ENCODE measurements at regions of chr10 and their contacts with region 1.

Region 1: GRCh38 chr10:69716711-69717560 is 84.8 kb upstream of the COL13A1 start:
- DNase-seq: peak; percentile 95
- ATAC-seq: peak; percentile 93
- H3K4me3 ChIP-seq: no peak overlapping the region
- H3K27ac ChIP-seq: no peak overlapping the region
- H3K4me1 ChIP-seq: peaks cover 3% of the 10 kb centered on the region; the same call in 1 of the 2 replicates
- H3K27me3 ChIP-seq: no peaks in the 10 kb centered on the region
- CTCF ChIP-seq: peak; percentile 99

Region 2: GRCh38 chr10:69413221-69413865 is 303.6 kb before region 1 on chr10:
- CTCF ChIA-PET with region 1: no interaction called
- POLR2A ChIA-PET with region 1: no interaction called
- intact Hi-C with region 1: no loop called
- DNase-seq: peak; percentile 69
- ATAC-seq: peak; percentile 25
- H3K4me3 ChIP-seq: no peak overlapping the region
- H3K27ac ChIP-seq: no peak overlapping the region
- H3K4me1 ChIP-seq: peaks cover 8% of the 10 kb centered on the region
- H3K27me3 ChIP-seq: no peaks in the 10 kb centered on the region
- CTCF ChIP-seq: peak; percentile 86

Region 3: DNA sequence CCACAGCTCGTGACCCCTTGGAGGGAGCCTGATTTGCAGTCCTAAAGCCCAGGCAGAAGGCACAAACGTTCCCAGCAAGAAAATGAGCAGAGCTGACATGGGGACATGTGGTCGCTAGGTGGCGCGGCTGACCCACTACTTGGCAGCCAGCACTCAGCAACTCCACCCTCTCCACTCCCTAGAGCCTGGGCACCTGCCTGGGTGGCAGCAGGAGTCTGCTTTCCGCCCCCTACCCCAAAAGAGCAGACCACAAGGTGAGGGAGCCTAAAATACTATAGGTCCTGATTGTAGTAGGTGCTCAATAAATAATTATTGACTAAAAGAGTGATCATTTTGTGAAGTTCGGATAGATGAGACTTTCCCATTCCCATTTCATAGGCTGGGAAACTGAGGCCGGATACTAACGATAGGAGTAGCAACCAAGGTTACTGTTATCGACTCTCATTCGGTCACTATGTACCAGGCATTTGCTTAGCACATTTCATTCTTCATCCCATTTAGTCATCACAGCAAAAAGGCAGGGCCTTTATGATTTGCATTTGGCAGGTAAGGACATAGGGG is 201.2 kb before region 1 on chr10:
- CTCF ChIA-PET with region 1: no interaction called
- POLR2A ChIA-PET with region 1: no interaction called
- intact Hi-C with region 1: loop called (anchors 5 kb)
- DNase-seq: peak; percentile 92
- ATAC-seq: peak; percentile 96
- H3K4me3 ChIP-seq: no peak overlapping the region
- H3K27ac ChIP-seq: no peak overlapping the region
- H3K4me1 ChIP-seq: no peaks in the 10 kb centered on the region
- H3K27me3 ChIP-seq: no peaks in the 10 kb centered on the region
- CTCF ChIP-seq: peak; percentile 98

Region 4: GRCh38 chr10:69644658-69645295 is 72.2 kb before region 1 on chr10:
- CTCF ChIA-PET with region 1: interaction called, 3 read pairs
- POLR2A ChIA-PET with region 1: no interaction called
- intact Hi-C with region 1: loop called (anchors 1 kb)
- DNase-seq: peak; percentile 89
- ATAC-seq: peak; percentile 68
- H3K4me3 ChIP-seq: no peak overlapping the region
- H3K27ac ChIP-seq: no peak overlapping the region
- H3K4me1 ChIP-seq: peaks cover 10% of the 10 kb centered on the region
- H3K27me3 ChIP-seq: no peaks in the 10 kb centered on the region
- CTCF ChIP-seq: peak; percentile 100

Region 5: GRCh38 chr10:69696073-69696731 is 20.7 kb before region 1 on chr10:
- CTCF ChIA-PET with region 1: interaction called, 8 read pairs
- POLR2A ChIA-PET with region 1: no interaction called
- intact Hi-C with region 1: loop called (anchors 1 kb)
- DNase-seq: peak; percentile 98
- ATAC-seq: peak; percentile 94
- H3K4me3 ChIP-seq: no peak overlapping the region
- H3K27ac ChIP-seq: peak overlapping the region; percentile 17
- H3K4me1 ChIP-seq: peaks cover 7% of the 10 kb centered on the region
- H3K27me3 ChIP-seq: peaks cover 17% of the 10 kb centered on the region; the same call in 1 of the 2 replicates
- CTCF ChIP-seq: peak; percentile 98

Region 6: DNA sequence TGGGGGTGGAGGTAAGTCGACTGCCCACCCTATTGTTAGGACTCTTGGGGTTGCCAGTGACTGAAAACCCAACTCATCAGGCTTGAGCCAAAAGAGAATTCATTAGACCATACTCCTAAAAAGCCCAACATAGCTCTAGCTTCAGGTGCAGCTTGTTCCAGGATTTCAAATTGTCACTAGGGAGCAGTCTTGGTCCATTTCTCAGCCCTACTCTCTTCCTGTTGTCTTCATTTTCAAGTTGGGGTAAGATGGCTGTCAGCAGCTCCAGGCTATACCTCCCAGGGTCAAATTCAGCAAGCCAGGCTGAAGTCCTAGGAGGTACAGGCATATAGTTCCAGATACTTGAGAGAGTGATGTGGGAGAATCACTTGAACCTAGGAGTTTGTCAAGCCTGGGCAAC is 69.9 kb after region 1 on chr10:
- CTCF ChIA-PET with region 1: interaction called, 11 read pairs
- POLR2A ChIA-PET with region 1: no interaction called
- intact Hi-C with region 1: no loop called
- DNase-seq: peak; percentile 82
- ATAC-seq: peak; percentile 92
- H3K4me3 ChIP-seq: no peak overlapping the region
- H3K27ac ChIP-seq: no peak overlapping the region
- H3K4me1 ChIP-seq: no peaks in the 10 kb centered on the region
- H3K27me3 ChIP-seq: peaks cover 27% of the 10 kb centered on the region
- CTCF ChIP-seq: peak; percentile 83

Measured in PC-3 (cell line).